ENCODE measurements at regions of chr5 and their contacts with region 1.

Region 1: DNA sequence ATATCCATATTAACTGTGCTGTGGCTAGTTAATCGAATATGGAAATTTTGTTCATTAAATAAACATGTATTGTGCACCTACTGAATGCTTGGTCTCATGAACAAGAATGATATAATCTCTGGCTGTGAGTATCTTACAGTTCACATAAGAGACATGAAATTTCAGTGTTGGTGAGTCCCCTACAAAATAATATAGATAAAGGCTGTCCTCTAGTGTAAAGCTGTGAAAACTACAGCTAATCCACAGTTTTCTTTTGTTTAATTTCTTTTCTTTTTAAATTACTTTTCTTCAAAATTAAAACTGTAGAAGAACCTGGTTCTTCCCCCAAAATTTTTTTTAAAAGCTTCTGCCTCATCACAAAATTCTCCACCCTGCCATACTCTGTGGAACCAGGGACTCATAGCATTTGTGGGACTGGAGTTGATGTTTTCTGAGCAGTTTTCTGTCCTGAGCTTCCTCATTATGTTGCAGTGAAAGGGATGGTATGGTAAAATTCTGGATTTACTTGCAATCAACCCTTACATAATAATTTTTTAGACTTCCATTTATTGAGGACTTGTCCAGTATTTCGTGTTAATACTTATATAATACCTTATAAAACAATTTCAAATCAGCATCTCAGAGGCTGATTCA is 135.0 kb downstream of the STK32A start:
- DNase-seq: no peak
- ATAC-seq: peak; percentile 53; the same call in 2 of the 3 replicates
- H3K4me3 ChIP-seq: no peak overlapping the region
- H3K27ac ChIP-seq: no peak overlapping the region
- H3K4me1 ChIP-seq: no peaks in the 10 kb centered on the region
- H3K27me3 ChIP-seq: no peaks in the 10 kb centered on the region; a peak in 1 of 4 replicates
- CTCF ChIP-seq: peak; percentile 12 to 49 (median 19); a peak in 2 of 6 replicates
- EP300 ChIP-seq: no peak
- POLR2A ChIP-seq: no peak
- RAD21 ChIP-seq: no peak

Region 2: GRCh38 chr5:147098233-147098790 is 271.5 kb before region 1 on chr5:
- CTCF ChIA-PET with region 1: interaction called, 16 read pairs
- POLR2A ChIA-PET with region 1: no interaction called
- RAD21 ChIA-PET with region 1: interaction called, 12 read pairs
- SMC1A ChIA-PET with region 1: interaction called, 15 read pairs
- in situ Hi-C with region 1: no loop called
- intact Hi-C with region 1: loop called (anchors 10 kb)
- DNase-seq: no peak
- ATAC-seq: peak; percentile 67; the same call in 2 of the 3 replicates
- H3K4me3 ChIP-seq: no peak overlapping the region
- H3K27ac ChIP-seq: no peak overlapping the region
- H3K4me1 ChIP-seq: no peaks in the 10 kb centered on the region
- H3K27me3 ChIP-seq: no peaks in the 10 kb centered on the region
- CTCF ChIP-seq: peak; percentile 42 to 54 (median 50)
- EP300 ChIP-seq: no peak
- POLR2A ChIP-seq: no peak
- RAD21 ChIP-seq: 0 out of 2 replicates have a peak, but pooled peaks have one; percentile 26

Region 3: GRCh38 chr5:147223948-147224791 is 145.7 kb before region 1 on chr5:
- CTCF ChIA-PET with region 1: interaction called, 61 read pairs
- POLR2A ChIA-PET with region 1: no interaction called
- RAD21 ChIA-PET with region 1: interaction called, 33 read pairs
- SMC1A ChIA-PET with region 1: interaction called, 27 read pairs
- in situ Hi-C with region 1: no loop called
- intact Hi-C with region 1: loop called (anchors 2 kb)
- DNase-seq: no peak
- ATAC-seq: peak; percentile 86
- H3K4me3 ChIP-seq: no peak overlapping the region
- H3K27ac ChIP-seq: no peak overlapping the region
- H3K4me1 ChIP-seq: no peaks in the 10 kb centered on the region
- H3K27me3 ChIP-seq: no peaks in the 10 kb centered on the region
- CTCF ChIP-seq: peak; percentile 36 to 58 (median 39); a peak in 5 of 6 replicates
- EP300 ChIP-seq: no peak
- POLR2A ChIP-seq: no peak
- RAD21 ChIP-seq: peak; percentile 56

Region 4: DNA sequence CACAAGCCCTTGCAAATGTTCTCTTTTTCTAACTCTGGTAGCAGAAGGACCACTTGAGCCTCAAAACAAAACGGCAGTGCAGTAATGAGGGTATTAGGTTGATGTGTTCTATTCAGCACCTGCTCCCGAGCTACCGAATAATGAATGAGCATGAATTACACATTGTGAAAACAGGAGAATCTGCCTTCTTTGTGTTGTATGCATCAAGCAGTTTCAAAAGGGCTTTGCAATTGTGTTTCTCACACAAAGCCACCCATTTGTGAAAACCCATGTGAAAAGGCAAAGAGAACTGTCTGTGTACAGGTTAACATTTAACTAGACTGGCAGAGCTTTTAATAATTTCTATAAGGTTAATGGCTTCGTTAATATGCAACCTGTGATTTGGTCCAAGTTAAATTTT is 37.2 kb before region 1 on chr5:
- CTCF ChIA-PET with region 1: interaction called, 4 read pairs
- POLR2A ChIA-PET with region 1: no interaction called
- RAD21 ChIA-PET with region 1: interaction called, 13 read pairs
- SMC1A ChIA-PET with region 1: interaction called, 4 read pairs
- in situ Hi-C with region 1: no loop called
- intact Hi-C with region 1: no loop called
- DNase-seq: peak; percentile 32
- ATAC-seq: peak; percentile 71
- H3K4me3 ChIP-seq: no peak overlapping the region
- H3K27ac ChIP-seq: no peak overlapping the region
- H3K4me1 ChIP-seq: no peaks in the 10 kb centered on the region
- H3K27me3 ChIP-seq: no peaks in the 10 kb centered on the region; a peak in 1 of 4 replicates
- CTCF ChIP-seq: no peak
- EP300 ChIP-seq: no peak
- POLR2A ChIP-seq: no peak
- RAD21 ChIP-seq: no peak

Region 5: DNA sequence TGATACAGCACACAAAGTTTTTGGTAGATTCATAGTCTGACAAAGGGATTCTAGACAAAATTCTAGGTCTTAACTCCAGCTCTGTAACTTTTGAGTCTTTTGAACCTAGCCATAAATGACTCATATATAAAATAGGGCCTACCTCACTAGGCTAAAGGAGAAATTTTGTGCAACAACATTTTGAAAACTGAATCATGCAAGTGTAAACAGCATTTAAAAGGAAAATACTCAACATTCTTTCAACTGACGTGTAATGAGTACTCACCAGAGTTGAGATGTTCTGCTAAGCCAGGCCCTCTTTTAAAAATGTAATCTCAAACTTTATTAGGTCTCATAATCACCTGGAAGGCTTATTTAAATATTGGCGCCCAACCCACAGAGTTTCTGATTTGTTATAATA is 21.8 kb before region 1 on chr5:
- CTCF ChIA-PET with region 1: interaction called, 11 read pairs
- POLR2A ChIA-PET with region 1: no interaction called
- RAD21 ChIA-PET with region 1: interaction called, 3 read pairs
- SMC1A ChIA-PET with region 1: interaction called, 4 read pairs
- in situ Hi-C with region 1: no loop called
- intact Hi-C with region 1: no loop called
- DNase-seq: no peak
- ATAC-seq: no peak
- H3K4me3 ChIP-seq: no peak overlapping the region
- H3K27ac ChIP-seq: no peak overlapping the region
- H3K4me1 ChIP-seq: no peaks in the 10 kb centered on the region
- H3K27me3 ChIP-seq: no peaks in the 10 kb centered on the region
- CTCF ChIP-seq: no peak
- EP300 ChIP-seq: no peak
- POLR2A ChIP-seq: no peak
- RAD21 ChIP-seq: no peak

Region 6: DNA sequence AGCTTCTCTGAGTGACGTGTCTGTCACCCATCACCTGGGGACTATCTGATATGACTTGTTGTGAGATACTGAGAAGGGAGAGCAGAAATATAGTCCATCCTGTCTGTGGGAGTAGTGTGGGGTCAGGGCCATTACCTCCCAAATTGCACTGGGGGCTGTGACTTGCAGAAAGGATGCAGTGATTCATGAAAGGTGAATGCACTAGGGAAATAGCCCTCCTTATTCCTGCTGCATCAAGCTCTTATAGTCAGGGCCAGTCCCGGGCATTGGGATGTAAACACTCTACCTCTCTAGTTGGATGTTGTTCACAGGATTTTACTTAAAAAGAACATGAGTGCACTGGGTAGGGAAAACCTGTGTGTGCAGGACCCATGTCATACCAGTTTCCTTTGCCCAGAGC is 10.3 kb before region 1 on chr5:
- CTCF ChIA-PET with region 1: interaction called, 13 read pairs
- POLR2A ChIA-PET with region 1: interaction called, 3 read pairs
- RAD21 ChIA-PET with region 1: interaction called, 3 read pairs
- SMC1A ChIA-PET with region 1: interaction called, 6 read pairs
- in situ Hi-C with region 1: no loop called
- intact Hi-C with region 1: no loop called
- DNase-seq: no peak
- ATAC-seq: no peak
- H3K4me3 ChIP-seq: no peak overlapping the region
- H3K27ac ChIP-seq: no peak overlapping the region
- H3K4me1 ChIP-seq: no peaks in the 10 kb centered on the region
- H3K27me3 ChIP-seq: no peaks in the 10 kb centered on the region; a peak in 1 of 4 replicates
- CTCF ChIP-seq: no peak
- EP300 ChIP-seq: no peak
- POLR2A ChIP-seq: no peak
- RAD21 ChIP-seq: no peak

Region 7: GRCh38 chr5:147391781-147392180 is 21.9 kb after region 1 on chr5:
- CTCF ChIA-PET with region 1: interaction called, 34 read pairs
- POLR2A ChIA-PET with region 1: no interaction called
- RAD21 ChIA-PET with region 1: interaction called, 3 read pairs
- SMC1A ChIA-PET with region 1: interaction called, 11 read pairs
- in situ Hi-C with region 1: no loop called
- intact Hi-C with region 1: no loop called
- DNase-seq: no peak
- ATAC-seq: peak; percentile 97
- H3K4me3 ChIP-seq: no peak overlapping the region
- H3K27ac ChIP-seq: no peak overlapping the region
- H3K4me1 ChIP-seq: no peaks in the 10 kb centered on the region
- H3K27me3 ChIP-seq: peaks cover 0 to 3% of the 10 kb centered on the region in 2 experiments; a peak in 3 of 4 replicates
- CTCF ChIP-seq: peak; percentile 45 to 59 (median 53); a peak in 5 of 6 replicates
- EP300 ChIP-seq: no peak
- POLR2A ChIP-seq: no peak
- RAD21 ChIP-seq: peak; percentile 40

Region 8: GRCh38 chr5:147439254-147439653 is 69.4 kb after region 1 on chr5:
- CTCF ChIA-PET with region 1: no interaction called
- POLR2A ChIA-PET with region 1: no interaction called
- RAD21 ChIA-PET with region 1: no interaction called
- SMC1A ChIA-PET with region 1: no interaction called
- in situ Hi-C with region 1: no loop called
- intact Hi-C with region 1: no loop called
- DNase-seq: no peak
- ATAC-seq: peak; percentile 55
- H3K4me3 ChIP-seq: no peak overlapping the region
- H3K27ac ChIP-seq: no peak overlapping the region
- H3K4me1 ChIP-seq: no peaks in the 10 kb centered on the region
- H3K27me3 ChIP-seq: no peaks in the 10 kb centered on the region; a peak in 2 of 4 replicates
- CTCF ChIP-seq: no peak
- EP300 ChIP-seq: no peak
- POLR2A ChIP-seq: no peak
- RAD21 ChIP-seq: no peak

Region 9: GRCh38 chr5:147613359-147613758 is 243.5 kb after region 1 on chr5:
- CTCF ChIA-PET with region 1: no interaction called
- POLR2A ChIA-PET with region 1: no interaction called
- RAD21 ChIA-PET with region 1: no interaction called
- SMC1A ChIA-PET with region 1: no interaction called
- in situ Hi-C with region 1: no loop called
- intact Hi-C with region 1: no loop called
- DNase-seq: no peak
- ATAC-seq: no peak
- H3K4me3 ChIP-seq: no peak overlapping the region
- H3K27ac ChIP-seq: no peak overlapping the region
- H3K4me1 ChIP-seq: no peaks in the 10 kb centered on the region
- H3K27me3 ChIP-seq: no peaks in the 10 kb centered on the region
- CTCF ChIP-seq: no peak
- EP300 ChIP-seq: no peak
- POLR2A ChIP-seq: no peak
- RAD21 ChIP-seq: no peak

Measured in GM12878 (cell line).